Ascending aorta (tissue), 2 donors: ENCODE measurements at regions of chr2 and their contacts with region 1.

Region 1: DNA sequence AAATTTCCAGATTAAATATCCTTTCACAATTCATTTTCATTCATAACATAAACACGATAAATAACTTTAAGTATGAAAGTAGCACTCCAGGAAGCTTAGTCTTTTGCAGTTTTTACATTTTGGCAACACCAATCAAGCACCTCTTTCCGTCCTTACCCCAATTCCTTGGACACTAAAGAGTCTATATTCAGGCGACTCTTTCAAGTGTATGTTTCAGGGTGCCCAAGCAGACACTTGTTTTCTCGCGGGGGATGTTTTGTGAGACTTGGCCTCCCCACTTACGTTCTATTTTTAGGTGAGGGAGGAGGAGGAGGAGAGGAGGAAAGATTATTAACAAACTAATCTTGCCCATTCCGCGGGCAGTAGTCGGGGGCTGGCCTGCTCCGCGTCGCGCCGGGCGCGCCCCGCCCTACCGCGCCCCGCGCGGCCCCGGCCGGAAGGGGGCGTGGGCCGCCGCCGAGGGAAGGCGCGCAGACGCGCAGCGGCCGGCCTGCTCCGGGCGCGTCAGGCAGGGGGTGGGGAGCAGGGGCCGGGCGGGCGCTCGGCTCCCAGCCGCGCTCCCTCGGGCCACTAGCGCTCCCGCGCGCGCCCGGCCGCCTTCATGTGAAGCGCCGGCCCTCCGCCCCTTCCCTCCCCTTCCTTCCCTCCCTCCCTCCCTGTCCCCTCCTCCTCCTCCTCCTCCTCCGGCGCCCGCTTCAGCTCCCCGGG is at the start of gene ITPRID2:
- DNase-seq: peak in 1 of 2 donors; percentile 92
- H3K4me3 ChIP-seq: peak within 1 kb of the TSS; percentile 94 to 99
- H3K27ac ChIP-seq: peak within 1 kb of the TSS; percentile 100
- H3K4me1 ChIP-seq: peaks cover 0 to 31% of the 10 kb centered on the region in 2 donors
- H3K27me3 ChIP-seq: no peaks in the 10 kb centered on the region
- CTCF ChIP-seq: peak in 1 of 3 experiments; percentile 57
- total RNA-seq, gene ITPRID2: 50.9 TPM

Region 2: GRCh38 chr2:180980106-180980942 is 911.1 kb before region 1 on chr2 and contains the start of gene UBE2E3:
- intact Hi-C with region 1: loop called (anchors 5 kb)
- DNase-seq: peak; percentile 14 to 89
- H3K4me3 ChIP-seq: peak within 1 kb of the TSS; percentile 72 to 76
- H3K27ac ChIP-seq: peak within 1 kb of the TSS; percentile 94 to 95
- H3K4me1 ChIP-seq: peaks cover 0 to 32% of the 10 kb centered on the region in 2 donors
- H3K27me3 ChIP-seq: no peaks in the 10 kb centered on the region
- CTCF ChIP-seq: peak; percentile 69 to 81 (median 79)
- total RNA-seq, gene UBE2E3: 125 TPM

Region 3: GRCh38 chr2:181810823-181811695 is 80.4 kb before region 1 on chr2:
- intact Hi-C with region 1: loop called (anchors 5 kb)
- DNase-seq: peak in 1 of 2 donors; percentile 63
- H3K4me3 ChIP-seq: peak overlapping the region in 1 of 2 donors; percentile 27
- H3K27ac ChIP-seq: peak overlapping the region in 1 of 2 donors; percentile 59
- H3K4me1 ChIP-seq: peaks cover 5 to 6% of the 10 kb centered on the region in 2 donors
- H3K27me3 ChIP-seq: no peaks in the 10 kb centered on the region
- CTCF ChIP-seq: no peak

Region 4: GRCh38 chr2:181850936-181851560 is 40.4 kb before region 1 on chr2:
- intact Hi-C with region 1: no loop called
- DNase-seq: no peak
- H3K4me3 ChIP-seq: no peak overlapping the region
- H3K27ac ChIP-seq: no peak overlapping the region
- H3K4me1 ChIP-seq: no peaks in the 10 kb centered on the region
- H3K27me3 ChIP-seq: no peaks in the 10 kb centered on the region
- CTCF ChIP-seq: no peak

Region 5: DNA sequence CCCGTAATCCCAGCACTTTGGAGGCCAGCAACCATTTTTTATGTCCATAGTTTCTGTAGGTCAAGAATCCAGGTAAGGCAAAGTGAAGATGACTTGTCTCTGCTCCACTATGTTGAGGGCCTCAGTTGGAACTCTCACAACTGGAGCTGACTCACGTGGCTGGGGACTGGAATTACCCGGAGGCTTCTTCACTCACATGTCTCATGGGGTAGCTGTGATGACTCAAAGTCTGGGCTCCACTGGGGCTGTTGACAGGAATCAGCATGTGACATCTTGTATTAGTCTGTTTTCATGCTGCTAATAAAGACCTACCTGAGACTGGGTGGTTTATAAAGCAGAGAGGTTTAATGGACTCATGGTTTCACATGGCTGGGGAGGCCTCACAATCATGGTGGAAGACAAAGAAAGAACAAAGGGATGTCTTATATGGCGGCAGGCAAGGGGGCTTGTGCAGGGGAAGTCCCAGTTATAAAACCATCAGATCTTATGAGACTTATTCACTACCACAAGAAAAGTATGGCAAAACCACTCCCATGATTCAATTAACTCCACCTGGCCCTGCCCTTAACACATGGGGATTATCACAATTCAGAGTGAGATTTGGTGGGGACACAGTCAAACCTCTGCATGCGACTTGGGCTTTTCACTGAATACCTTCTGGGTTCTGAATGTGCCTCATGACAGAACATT is 86.4 kb after region 1 on chr2:
- intact Hi-C with region 1: no loop called
- DNase-seq: no peak
- H3K4me3 ChIP-seq: no peak overlapping the region
- H3K27ac ChIP-seq: no peak overlapping the region
- H3K4me1 ChIP-seq: no peaks in the 10 kb centered on the region
- H3K27me3 ChIP-seq: no peaks in the 10 kb centered on the region
- CTCF ChIP-seq: no peak

Region 6: DNA sequence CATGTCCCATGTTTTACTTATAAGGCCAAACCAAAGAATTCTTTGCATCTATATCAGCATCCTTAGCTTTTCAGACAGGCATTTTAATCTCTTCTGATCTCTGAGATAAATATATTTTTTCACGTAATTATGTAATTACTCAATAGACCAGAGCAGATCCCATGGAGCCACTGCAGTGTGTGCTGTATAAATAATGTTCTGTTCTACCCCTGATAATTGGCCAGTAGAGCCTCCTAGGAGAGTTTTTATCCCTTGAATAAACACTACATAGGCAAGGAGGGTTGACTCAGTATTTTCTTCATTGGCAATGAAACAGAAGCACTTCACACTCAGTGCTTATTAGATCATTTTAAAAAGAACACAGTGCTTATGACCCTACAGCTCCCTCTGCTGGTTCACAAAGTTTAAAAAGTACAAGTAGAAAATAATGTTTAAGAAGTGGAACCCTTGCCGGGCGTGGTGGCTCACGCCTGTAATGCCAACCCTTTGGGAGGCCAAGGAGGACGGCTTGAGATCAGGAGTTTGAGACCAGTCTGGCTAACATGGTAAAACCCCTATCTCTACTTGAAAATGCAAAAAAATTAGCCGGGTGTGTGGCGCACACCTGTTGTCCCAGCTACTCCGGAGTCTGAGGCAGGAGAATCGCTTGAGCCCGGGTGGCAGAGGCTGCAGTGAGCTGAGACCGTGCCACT is 186.2 kb after region 1 on chr2:
- intact Hi-C with region 1: loop called (anchors 10 kb)
- DNase-seq: no peak
- H3K4me3 ChIP-seq: no peak overlapping the region
- H3K27ac ChIP-seq: no peak overlapping the region
- H3K4me1 ChIP-seq: peaks cover 0 to 3% of the 10 kb centered on the region in 2 donors
- H3K27me3 ChIP-seq: no peaks in the 10 kb centered on the region
- CTCF ChIP-seq: peak; percentile 27 to 79 (median 71)

Region 7: GRCh38 chr2:182715896-182716668 is 824.7 kb after region 1 on chr2 and contains the start of gene DNAJC10:
- intact Hi-C with region 1: loop called (anchors 5 kb)
- DNase-seq: peak; percentile 70 to 94
- H3K4me3 ChIP-seq: peak within 1 kb of the TSS; percentile 82 to 91
- H3K27ac ChIP-seq: peak within 1 kb of the TSS; percentile 86 to 90
- H3K4me1 ChIP-seq: peaks cover 0 to 4% of the 10 kb centered on the region in 2 donors
- H3K27me3 ChIP-seq: no peaks in the 10 kb centered on the region
- CTCF ChIP-seq: no peak
- total RNA-seq, gene DNAJC10: 26.0 TPM

Region 8: GRCh38 chr2:183038341-183039300 is 1147.2 kb after region 1 on chr2 and contains the start of gene NCKAP1:
- intact Hi-C with region 1: loop called (anchors 5 kb)
- DNase-seq: peak; percentile 54 to 95
- H3K4me3 ChIP-seq: peak within 1 kb of the TSS; percentile 87 to 95
- H3K27ac ChIP-seq: peak within 1 kb of the TSS; percentile 99 to 100
- H3K4me1 ChIP-seq: peaks cover 0 to 22% of the 10 kb centered on the region in 2 donors
- H3K27me3 ChIP-seq: no peaks in the 10 kb centered on the region
- CTCF ChIP-seq: peak; percentile 45 to 97 (median 75)
- total RNA-seq, gene NCKAP1: 55.7 TPM